Psoas muscle (tissue), 8 donors: ENCODE measurements at regions of chrX and their contacts with region 1.

Region 1: DNA sequence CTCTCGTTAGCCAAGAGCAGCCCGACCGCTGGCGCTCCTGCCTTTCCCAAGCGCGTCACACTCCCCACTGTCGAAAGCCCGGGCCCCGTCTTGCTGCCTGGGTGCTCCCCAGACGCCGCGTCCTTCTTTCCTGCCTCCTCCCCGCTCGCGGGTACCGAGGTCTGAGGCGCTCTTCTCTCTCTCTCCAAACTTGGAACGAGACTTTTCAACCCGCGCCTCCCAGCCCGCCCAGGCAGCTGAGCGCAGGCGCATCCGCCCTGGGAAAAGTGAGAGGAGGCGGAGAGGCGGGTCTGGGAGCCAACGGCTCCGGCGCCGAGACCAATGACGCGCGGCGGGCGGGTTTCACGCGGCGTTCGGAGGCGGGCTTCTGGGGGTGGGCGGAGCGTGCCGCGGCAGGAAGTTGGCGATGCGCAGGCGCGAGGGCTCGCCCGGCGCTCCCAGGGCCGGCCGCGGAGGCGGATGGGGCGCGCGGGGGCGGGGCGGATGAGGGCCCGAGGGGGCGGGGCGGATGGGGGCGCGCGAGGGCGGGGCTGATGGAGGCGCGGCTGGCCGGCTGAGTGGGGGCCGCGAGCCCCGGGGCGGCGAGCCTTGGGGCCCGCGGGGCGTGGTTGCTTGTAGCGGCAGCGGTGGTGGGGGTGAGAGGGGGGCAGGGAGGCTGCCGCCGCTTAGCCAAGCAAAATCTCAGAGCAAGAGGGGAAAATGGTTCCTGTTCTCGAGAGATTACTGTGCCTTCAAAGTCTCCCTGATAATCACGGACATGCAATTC is at the start of gene RBBP7:
- DNase-seq: peak; percentile 95 to 98
- ATAC-seq: peak; percentile 94 to 97 (median 96)
- H3K4me3 ChIP-seq: peak within 1 kb of the TSS; percentile 79
- H3K27ac ChIP-seq: peak within 1 kb of the TSS; percentile 94
- H3K4me1 ChIP-seq: peaks cover 15% of the 10 kb centered on the region
- H3K27me3 ChIP-seq: peaks cover 0 to 8% (median 0%) of the 10 kb centered on the region in 3 donors
- CTCF ChIP-seq: no peak
- total RNA-seq, gene RBBP7: 81.1 to 107 (median 90.5) TPM

Region 2: GRCh38 chrX:16719334-16720084 is 150.8 kb before region 1 on chrX and contains the start of gene SYAP1:
- intact Hi-C with region 1: loop called (anchors 10 kb)
- DNase-seq: peak; percentile 97 to 99
- ATAC-seq: peak; percentile 95 to 97 (median 97)
- H3K4me3 ChIP-seq: peak within 1 kb of the TSS; percentile 75
- H3K27ac ChIP-seq: peak within 1 kb of the TSS; percentile 91
- H3K4me1 ChIP-seq: peaks cover 13% of the 10 kb centered on the region
- H3K27me3 ChIP-seq: peaks cover 0 to under 1% (median 0%) of the 10 kb centered on the region in 3 donors
- CTCF ChIP-seq: no peak
- total RNA-seq, gene SYAP1: 13.7 to 29.4 (median 20.0) TPM

Region 3: GRCh38 chrX:16826207-16826606 is 44.1 kb before region 1 on chrX:
- intact Hi-C with region 1: no loop called
- DNase-seq: no peak
- ATAC-seq: peak; percentile 32 to 61 (median 53)
- H3K4me3 ChIP-seq: no peak overlapping the region
- H3K27ac ChIP-seq: no peak overlapping the region
- H3K4me1 ChIP-seq: peaks cover 7% of the 10 kb centered on the region
- H3K27me3 ChIP-seq: no peaks in the 10 kb centered on the region
- CTCF ChIP-seq: peak; percentile 65

Region 4: DNA sequence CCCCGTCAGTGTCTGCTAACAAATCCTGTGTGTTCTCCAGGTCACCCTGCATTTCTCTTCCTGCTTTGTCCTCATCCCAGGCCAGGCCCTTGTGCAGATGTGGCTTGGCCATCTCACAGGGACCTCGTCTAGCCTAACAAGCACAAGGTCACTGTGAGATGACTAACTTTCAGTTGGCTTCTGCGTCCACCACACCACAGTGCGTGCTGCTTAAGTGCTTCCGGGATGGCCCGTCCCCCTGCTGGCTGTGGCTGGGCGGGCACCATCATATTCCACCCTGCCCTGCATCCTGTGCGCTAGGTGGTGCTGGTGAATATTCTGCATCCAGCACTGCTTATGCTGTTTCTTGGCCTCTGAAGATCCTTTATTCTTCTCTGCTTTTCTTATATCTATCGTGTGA is 33.9 kb before region 1 on chrX:
- intact Hi-C with region 1: loop called in 1 of 2 experiments (anchors 5 kb)
- DNase-seq: peak; percentile 37 to 59
- ATAC-seq: peak in 3 of 4 donors; percentile 28 to 53 (median 36)
- H3K4me3 ChIP-seq: no peak overlapping the region
- H3K27ac ChIP-seq: no peak overlapping the region
- H3K4me1 ChIP-seq: peaks cover 14% of the 10 kb centered on the region
- H3K27me3 ChIP-seq: no peaks in the 10 kb centered on the region
- CTCF ChIP-seq: peak; percentile 20